Endothelial cell of umbilical vein (primary cell): ENCODE measurements at regions of chr6 and their contacts with region 1.

Region 1: GRCh38 chr6:150537893-150538292 is 61.8 kb upstream of the PLEKHG1 start:
- DNase-seq: no peak
- H3K4me3 ChIP-seq: no peak overlapping the region
- H3K27ac ChIP-seq: no peak overlapping the region
- H3K4me1 ChIP-seq: no peaks in the 10 kb centered on the region
- H3K27me3 ChIP-seq: peaks cover 5 to 6% of the 10 kb centered on the region in 2 experiments
- CTCF ChIP-seq: no peak
- POLR2A ChIP-seq: no peak

Region 2: DNA sequence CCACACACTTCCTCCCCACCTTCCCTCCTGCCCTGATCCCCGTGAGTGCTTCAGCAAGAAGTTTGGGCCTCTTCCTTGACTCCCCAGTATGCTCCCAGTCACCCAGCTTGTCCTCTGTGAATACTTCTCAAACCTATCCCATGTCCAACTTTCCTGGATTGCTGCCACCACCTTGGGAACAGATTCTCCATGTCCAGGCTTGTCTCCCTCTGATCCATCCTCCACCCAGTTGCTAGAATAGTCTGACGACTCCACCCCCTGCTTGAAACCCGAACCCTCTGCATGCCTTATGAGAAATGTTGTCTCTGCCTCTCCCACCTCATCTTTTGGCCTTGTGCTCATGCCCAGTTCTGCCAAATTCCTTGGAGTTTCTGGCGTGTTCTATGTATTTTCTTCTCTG is 287.1 kb before region 1 on chr6:
- CTCF ChIA-PET with region 1: no interaction called
- POLR2A ChIA-PET with region 1: no interaction called
- dilution Hi-C with region 1: no loop called
- intact Hi-C with region 1: loop called (anchors 5 kb)
- DNase-seq: no peak
- H3K4me3 ChIP-seq: no peak overlapping the region
- H3K27ac ChIP-seq: no peak overlapping the region
- H3K4me1 ChIP-seq: no peaks in the 10 kb centered on the region
- H3K27me3 ChIP-seq: peaks cover 0 to 2% of the 10 kb centered on the region in 2 experiments
- CTCF ChIP-seq: no peak
- POLR2A ChIP-seq: no peak

Region 3: GRCh38 chr6:150517175-150517574 is 20.7 kb before region 1 on chr6:
- CTCF ChIA-PET with region 1: no interaction called
- POLR2A ChIA-PET with region 1: no interaction called
- dilution Hi-C with region 1: no loop called
- intact Hi-C with region 1: no loop called
- DNase-seq: no peak
- H3K4me3 ChIP-seq: no peak overlapping the region
- H3K27ac ChIP-seq: no peak overlapping the region
- H3K4me1 ChIP-seq: no peaks in the 10 kb centered on the region
- H3K27me3 ChIP-seq: peaks cover 6% of the 10 kb centered on the region in 2 experiments
- CTCF ChIP-seq: no peak
- POLR2A ChIP-seq: no peak

Region 4: DNA sequence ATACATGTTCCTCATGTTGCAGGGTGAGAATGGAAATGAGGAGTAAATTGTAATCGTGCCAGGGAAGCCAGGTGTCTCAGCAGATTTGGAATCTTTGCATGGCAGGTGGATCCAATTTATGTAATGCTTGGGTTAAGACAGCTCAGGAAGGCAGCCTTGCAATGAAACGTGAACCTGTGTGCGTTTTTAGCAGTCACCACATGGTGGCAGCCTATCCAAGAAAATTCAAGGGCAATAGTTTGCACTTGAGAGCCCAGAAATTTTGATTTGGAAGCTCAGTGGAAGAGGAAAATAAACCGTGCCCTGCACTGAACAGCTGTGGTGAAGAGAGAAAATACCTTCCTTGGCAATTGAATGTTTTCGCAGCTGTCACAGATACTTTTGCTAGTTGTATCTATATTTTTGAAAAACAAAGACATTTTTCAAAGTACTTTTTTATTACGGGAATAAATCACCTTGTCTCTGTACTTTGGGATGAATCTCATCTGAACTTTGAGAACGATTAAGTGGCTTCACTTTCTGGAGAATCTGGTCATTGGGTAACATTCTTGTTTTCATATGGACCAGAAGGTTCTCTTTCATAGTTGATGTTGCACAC is 354.1 kb after region 1 on chr6:
- CTCF ChIA-PET with region 1: no interaction called
- POLR2A ChIA-PET with region 1: no interaction called
- dilution Hi-C with region 1: no loop called
- intact Hi-C with region 1: no loop called
- DNase-seq: peak; percentile 90
- H3K4me3 ChIP-seq: no peak overlapping the region
- H3K27ac ChIP-seq: peak overlapping the region; percentile 8
- H3K4me1 ChIP-seq: peaks cover 2% of the 10 kb centered on the region
- H3K27me3 ChIP-seq: no peaks in the 10 kb centered on the region
- CTCF ChIP-seq: peak; percentile 78 to 82
- POLR2A ChIP-seq: no peak